B cell (primary cell): ENCODE measurements at regions of chr1 and their contacts with region 1.

Region 1: GRCh38 chr1:23751050-23751814 is 8.0 kb downstream of the ELOA start:
- DNase-seq: peak; percentile 69
- ATAC-seq: peak; percentile 79
- H3K4me3 ChIP-seq: no peak overlapping the region
- H3K4me3 Mint-ChIP-seq: no peak overlapping the region
- H3K27ac ChIP-seq: peak overlapping the region in 1 of 2 donors; percentile 52
- H3K27ac Mint-ChIP-seq: peak overlapping the region; percentile 21
- H3K4me1 ChIP-seq: peaks cover 10 to 15% of the 10 kb centered on the region in 2 donors
- H3K4me1 Mint-ChIP-seq: peaks cover 33% of the 10 kb centered on the region
- H3K27me3 ChIP-seq: no peaks in the 10 kb centered on the region
- H3K27me3 Mint-ChIP-seq: no peaks in the 10 kb centered on the region
- CTCF ChIP-seq: peak; percentile 85

Region 2: DNA sequence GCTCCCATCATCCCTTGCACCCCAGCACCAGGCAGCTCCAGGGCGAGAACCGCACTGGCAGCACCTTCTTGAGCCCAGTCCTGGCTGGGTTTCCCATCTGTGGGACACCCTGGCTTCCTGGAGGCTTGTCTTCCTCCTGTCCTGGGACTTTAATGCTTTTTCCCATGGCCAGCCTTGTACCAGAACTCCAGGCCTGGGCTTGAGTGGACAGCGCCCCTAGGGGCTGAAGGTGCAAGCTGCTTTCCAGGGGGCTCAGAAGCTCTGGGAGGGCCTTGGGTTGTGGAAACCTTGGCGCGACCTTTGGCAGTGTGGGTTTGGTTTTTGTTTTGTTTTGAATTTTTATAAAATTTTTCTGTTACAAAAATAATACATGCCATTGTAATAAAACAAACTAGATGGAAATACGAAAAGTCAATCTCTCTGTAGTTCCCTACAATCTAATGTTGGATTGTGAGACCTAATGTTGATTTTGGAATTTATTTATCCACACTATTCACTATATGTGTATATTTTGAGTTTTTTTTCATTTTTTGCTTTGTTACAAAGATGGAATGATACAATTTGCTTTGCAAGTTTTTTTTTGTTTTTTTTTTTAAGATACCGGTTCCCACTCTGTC is 93.5 kb before region 1 on chr1:
- CTCF ChIA-PET with region 1: interaction called, 10 read pairs
- POLR2A ChIA-PET with region 1: no interaction called
- intact Hi-C with region 1: no loop called
- DNase-seq: peak; percentile 47
- ATAC-seq: no peak
- H3K4me3 ChIP-seq: no peak overlapping the region
- H3K4me3 Mint-ChIP-seq: no peak overlapping the region
- H3K27ac ChIP-seq: no peak overlapping the region
- H3K27ac Mint-ChIP-seq: no peak overlapping the region
- H3K4me1 ChIP-seq: no peaks in the 10 kb centered on the region
- H3K4me1 Mint-ChIP-seq: no peaks in the 10 kb centered on the region
- H3K27me3 ChIP-seq: peaks cover 0 to 3% (median 0%) of the 10 kb centered on the region in 4 experiments
- H3K27me3 Mint-ChIP-seq: peaks cover 4% of the 10 kb centered on the region
- CTCF ChIP-seq: peak; percentile 76